ENCODE measurements at regions of chr5 and their contacts with region 1.

Region 1: GRCh38 chr5:157948738-157949410 is 89.9 kb upstream of the CLINT1 start:
- DNase-seq: peak; percentile 71 to 93 (median 88)
- ATAC-seq: peak; percentile 95 to 100 (median 98)
- H3K4me3 ChIP-seq: peak overlapping the region in 4 of 12 donors; percentile 1 to 26 (median 10)
- H3K27ac ChIP-seq: peak overlapping the region in 4 of 12 donors; percentile 31 to 73 (median 41)
- H3K4me1 ChIP-seq: peaks cover 0 to 9% (median 4%) of the 10 kb centered on the region in 12 donors
- H3K27me3 ChIP-seq: no peaks in the 10 kb centered on the region
- CTCF ChIP-seq: peak; percentile 79 to 95 (median 88)
- POLR2A ChIP-seq: no peak

Region 2: DNA sequence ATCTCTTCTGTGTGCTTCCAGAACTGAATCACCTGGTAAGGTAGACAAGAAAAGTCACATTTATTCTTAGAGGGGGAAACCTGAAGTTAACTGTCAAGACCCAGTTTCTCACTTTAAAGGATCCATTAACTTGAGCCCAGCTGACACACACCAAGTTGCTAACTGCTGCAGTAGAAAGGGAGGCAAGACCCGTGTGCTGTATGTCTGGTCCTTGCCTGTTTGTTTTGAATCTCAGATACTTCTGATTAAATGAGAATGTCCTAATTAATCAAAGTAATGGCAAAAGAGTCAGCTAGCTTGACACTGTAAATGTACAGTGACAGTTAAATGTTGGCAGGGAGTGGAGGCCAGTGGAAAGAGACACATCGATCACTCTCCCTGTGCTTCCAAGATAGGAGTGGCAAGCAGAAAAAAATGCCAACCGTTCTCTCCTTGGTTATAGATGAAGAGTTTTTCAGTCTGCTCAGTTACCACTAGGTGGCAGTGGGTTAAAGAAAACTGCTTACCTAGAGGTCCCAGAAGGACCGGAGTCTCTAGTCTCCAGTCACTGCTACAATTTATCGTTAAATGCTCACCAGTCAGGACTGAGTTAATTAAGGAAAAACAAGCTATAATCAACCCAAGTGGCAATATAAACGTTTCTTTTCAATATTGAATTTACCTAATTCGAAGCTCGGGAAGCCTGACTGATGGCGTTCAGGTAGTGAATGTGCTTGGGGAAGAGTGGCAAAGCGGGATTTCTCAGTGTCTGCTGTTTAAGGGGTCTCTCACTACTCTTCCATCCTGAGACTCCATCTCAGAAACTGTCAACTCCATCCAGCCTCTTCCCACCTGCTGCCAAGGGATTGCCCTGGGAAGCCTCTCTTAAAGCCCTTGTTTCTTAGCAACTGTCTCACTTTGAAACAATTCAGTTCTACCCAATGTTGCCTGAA is 186.9 kb before region 1 on chr5:
- intact Hi-C with region 1: loop called in 1 of 10 experiments (anchors 5 kb)
- DNase-seq: no peak
- ATAC-seq: peak; percentile 32 to 86 (median 77)
- H3K4me3 ChIP-seq: no peak overlapping the region
- H3K27ac ChIP-seq: no peak overlapping the region
- H3K4me1 ChIP-seq: peaks cover 0 to 6% (median 0%) of the 10 kb centered on the region in 12 donors
- H3K27me3 ChIP-seq: no peaks in the 10 kb centered on the region
- CTCF ChIP-seq: peak; percentile 62 to 83 (median 78)
- POLR2A ChIP-seq: no peak

Region 3: DNA sequence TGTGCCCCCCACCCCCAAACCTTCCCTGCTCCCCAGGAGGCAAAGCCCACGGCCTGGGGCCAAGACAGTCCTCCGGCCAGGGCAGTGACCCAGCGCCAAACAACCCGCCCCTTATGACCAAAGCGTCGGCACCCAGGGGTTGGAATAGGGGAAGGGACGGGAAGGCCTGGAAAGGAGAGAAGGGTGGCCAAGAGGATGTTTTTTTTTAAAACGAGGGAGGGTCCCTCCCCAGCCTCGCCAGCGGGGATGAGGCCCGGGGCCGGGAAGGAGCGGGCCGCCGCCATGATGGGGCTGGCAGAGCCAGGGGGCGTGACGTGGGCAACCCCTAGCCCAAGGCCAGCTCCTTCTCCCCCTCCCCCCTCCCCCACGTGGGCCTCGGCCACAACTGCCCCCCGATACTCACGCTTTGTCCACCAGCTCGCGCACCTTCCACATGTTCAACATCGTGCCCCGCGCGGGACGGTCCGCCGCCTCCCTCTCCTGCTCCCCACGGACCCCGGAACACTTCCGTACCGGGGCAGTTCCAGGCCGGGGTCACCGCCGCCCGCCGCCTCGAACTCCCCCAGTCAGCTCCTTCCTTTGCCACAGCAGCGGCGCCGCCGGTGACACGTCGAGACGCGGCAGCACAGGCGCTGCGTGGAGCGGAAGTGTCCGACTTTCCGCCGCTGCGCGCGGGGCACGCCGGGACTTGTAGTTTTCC is 90.2 kb before region 1 on chr5 and contains the start of gene CLINT1:
- intact Hi-C with region 1: loop called (anchors 1 to 5 kb)
- DNase-seq: peak; percentile 93 to 97 (median 94)
- ATAC-seq: peak; percentile 93 to 99 (median 99)
- H3K4me3 ChIP-seq: peak within 1 kb of the TSS; percentile 67 to 98 (median 88)
- H3K27ac ChIP-seq: peak within 1 kb of the TSS; percentile 35 to 93 (median 90)
- H3K4me1 ChIP-seq: peaks cover 0 to 47% (median 26%) of the 10 kb centered on the region in 12 donors
- H3K27me3 ChIP-seq: no peaks in the 10 kb centered on the region
- CTCF ChIP-seq: peak in 1 of 12 donors; percentile 12
- POLR2A ChIP-seq: peak in 1 of 2 donors; percentile 82
- total RNA-seq, gene CLINT1: 40.1 to 84.8 (median 51.2) TPM

Region 4: GRCh38 chr5:157917899-157918809 is 30.7 kb before region 1 on chr5:
- intact Hi-C with region 1: loop called in 1 of 10 experiments (anchors 2 kb)
- DNase-seq: peak; percentile 51 to 73 (median 58)
- ATAC-seq: peak in 2 of 4 donors; percentile 36 to 55
- H3K4me3 ChIP-seq: no peak overlapping the region
- H3K27ac ChIP-seq: peak overlapping the region in 1 of 12 donors; percentile 24
- H3K4me1 ChIP-seq: peaks cover 0 to 47% (median 29%) of the 10 kb centered on the region in 12 donors
- H3K27me3 ChIP-seq: no peaks in the 10 kb centered on the region
- CTCF ChIP-seq: peak; percentile 9 to 61 (median 44)
- POLR2A ChIP-seq: no peak

Region 5: GRCh38 chr5:157994906-157995519 is 46.1 kb after region 1 on chr5:
- intact Hi-C with region 1: loop called in 1 of 10 experiments (anchors 5 kb)
- DNase-seq: peak; percentile 60 to 73 (median 69)
- ATAC-seq: peak; percentile 91 to 96 (median 95)
- H3K4me3 ChIP-seq: no peak overlapping the region
- H3K27ac ChIP-seq: no peak overlapping the region
- H3K4me1 ChIP-seq: no peaks in the 10 kb centered on the region
- H3K27me3 ChIP-seq: peaks cover 0 to 4% (median 0%) of the 10 kb centered on the region in 9 donors
- CTCF ChIP-seq: peak; percentile 56 to 81 (median 76)
- POLR2A ChIP-seq: no peak

Measured in heart left ventricle (tissue), 16 donors.